ENCODE measurements at regions of chr6 and their contacts with region 1.

Region 1: GRCh38 chr6:490251-491037 is 98.9 kb downstream of the IRF4 start:
- DNase-seq: peak; percentile 71
- ATAC-seq: peak; percentile 62
- H3K4me3 Mint-ChIP-seq: peak overlapping the region; percentile 58
- H3K27ac Mint-ChIP-seq: peak overlapping the region; percentile 97
- H3K4me1 Mint-ChIP-seq: peaks cover 95% of the 10 kb centered on the region
- H3K27me3 Mint-ChIP-seq: no peaks in the 10 kb centered on the region

Region 2: DNA sequence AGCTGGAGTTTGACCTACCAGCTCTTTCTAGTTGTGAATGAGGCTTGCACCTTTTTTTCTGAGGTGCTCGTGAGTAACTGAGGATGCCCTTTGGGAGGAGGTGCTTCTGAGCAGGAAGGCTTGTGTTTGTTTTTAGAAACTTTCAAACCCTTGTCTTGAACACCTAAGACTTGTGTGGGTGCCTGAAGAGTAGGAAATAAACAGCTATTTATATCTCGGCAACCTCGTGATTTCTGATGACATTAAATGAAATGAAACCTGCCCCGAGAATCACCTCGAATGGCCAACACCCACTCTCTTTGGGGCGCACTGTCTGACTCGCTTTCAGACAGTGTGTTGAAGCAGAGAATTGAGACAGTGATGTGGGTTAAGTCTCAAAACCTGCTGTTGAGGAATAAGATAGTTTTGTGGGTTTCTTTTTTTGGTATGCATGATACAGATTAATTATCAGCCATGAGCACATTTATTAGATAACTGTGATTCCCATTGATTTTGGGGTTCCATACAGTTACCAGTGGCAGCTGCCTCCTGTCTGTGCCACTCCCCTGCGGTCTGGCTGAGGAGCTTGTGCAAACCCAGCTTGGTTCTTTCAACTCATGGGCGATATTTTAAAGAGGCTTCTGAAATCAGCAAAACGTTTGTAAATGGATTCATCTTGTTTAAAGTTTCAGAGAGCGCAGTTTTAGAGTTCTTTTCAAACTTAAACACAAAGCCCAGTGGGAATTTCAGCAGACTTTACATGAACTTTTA is 90.5 kb before region 1 on chr6:
- CTCF ChIA-PET with region 1: interaction called, 12 read pairs
- POLR2A ChIA-PET with region 1: interaction called, 21 read pairs
- intact Hi-C with region 1: loop called (anchors 2 kb)
- DNase-seq: peak; percentile 78
- ATAC-seq: peak; percentile 28
- H3K4me3 Mint-ChIP-seq: peak overlapping the region; percentile 68
- H3K27ac Mint-ChIP-seq: peak overlapping the region; percentile 88
- H3K4me1 Mint-ChIP-seq: peaks cover 91% of the 10 kb centered on the region
- H3K27me3 Mint-ChIP-seq: no peaks in the 10 kb centered on the region

Region 3: DNA sequence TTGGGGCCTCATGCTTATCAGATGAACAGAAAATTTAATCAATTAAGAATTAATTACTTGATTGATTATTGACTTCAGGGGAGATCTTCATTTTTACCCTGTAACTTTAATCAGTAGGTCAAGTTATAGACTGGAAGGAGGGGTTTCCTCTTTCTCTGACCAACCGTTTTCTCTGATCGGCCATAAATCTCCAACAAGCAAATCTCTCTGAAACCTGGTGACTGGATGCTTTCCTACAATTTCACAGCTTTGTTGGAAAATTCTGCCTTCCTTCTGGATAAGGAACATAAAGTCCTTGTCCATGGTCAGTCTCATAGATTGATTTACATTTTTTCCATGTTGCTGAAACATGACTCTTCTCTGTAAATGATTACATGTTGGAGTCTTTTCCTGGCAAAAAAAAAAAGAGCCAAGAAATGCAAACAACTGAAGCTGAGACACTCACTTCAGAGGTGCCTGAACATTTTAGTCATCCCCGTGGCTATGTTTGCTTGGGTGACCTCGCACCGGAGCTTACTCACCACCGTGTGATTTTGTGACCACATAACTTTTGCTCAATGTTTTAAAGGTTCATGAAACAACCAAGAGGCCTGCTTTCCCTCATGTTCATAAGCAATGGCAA is 67.9 kb before region 1 on chr6:
- CTCF ChIA-PET with region 1: no interaction called
- POLR2A ChIA-PET with region 1: interaction called, 3 read pairs
- intact Hi-C with region 1: loop called in 1 of 2 experiments (anchors 2 kb)
- DNase-seq: peak; percentile 87
- ATAC-seq: peak; percentile 99
- H3K4me3 Mint-ChIP-seq: no peak overlapping the region
- H3K27ac Mint-ChIP-seq: peak overlapping the region; percentile 63
- H3K4me1 Mint-ChIP-seq: peaks cover 31% of the 10 kb centered on the region
- H3K27me3 Mint-ChIP-seq: no peaks in the 10 kb centered on the region

Region 4: DNA sequence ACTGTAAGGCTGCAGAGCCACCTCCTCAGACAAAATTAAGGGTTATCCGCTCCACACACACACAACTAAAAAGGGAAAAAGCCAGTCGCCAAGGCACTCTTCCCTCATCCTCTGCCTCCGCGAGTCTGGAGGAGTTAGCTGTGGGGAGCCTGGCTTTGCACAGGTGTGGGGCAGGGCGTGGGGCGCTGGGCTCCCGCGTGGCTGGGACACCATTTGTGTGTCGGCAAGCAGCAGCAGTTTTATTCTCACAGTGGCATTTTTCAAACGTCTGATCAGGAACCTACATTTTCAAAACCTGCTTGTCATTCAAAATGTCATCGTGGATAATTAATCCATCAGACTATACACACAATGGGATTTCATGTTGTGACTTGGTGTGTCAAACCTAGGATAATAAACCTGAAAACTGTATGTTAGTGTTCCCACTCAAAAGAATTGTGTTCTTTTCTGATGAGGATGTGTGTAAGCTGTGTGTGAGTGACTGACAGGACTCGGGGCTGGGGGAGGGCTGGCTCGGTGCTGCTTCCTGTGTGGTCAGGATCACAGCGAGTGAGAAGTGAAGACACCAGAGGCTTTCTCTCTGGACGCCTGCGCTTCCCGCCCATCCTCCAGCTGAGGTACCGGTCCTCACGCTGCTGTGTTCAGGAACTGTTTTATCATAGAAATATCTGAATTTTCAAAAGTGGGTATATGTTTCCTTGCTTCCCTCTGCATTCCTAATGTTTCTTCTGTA is 15.8 kb before region 1 on chr6:
- CTCF ChIA-PET with region 1: interaction called, 3 read pairs
- POLR2A ChIA-PET with region 1: interaction called, 10 read pairs
- intact Hi-C with region 1: no loop called
- DNase-seq: peak; percentile 92
- ATAC-seq: peak; percentile 95
- H3K4me3 Mint-ChIP-seq: peak overlapping the region; percentile 63
- H3K27ac Mint-ChIP-seq: peak overlapping the region; percentile 79
- H3K4me1 Mint-ChIP-seq: peaks cover 77% of the 10 kb centered on the region
- H3K27me3 Mint-ChIP-seq: no peaks in the 10 kb centered on the region

Region 5: DNA sequence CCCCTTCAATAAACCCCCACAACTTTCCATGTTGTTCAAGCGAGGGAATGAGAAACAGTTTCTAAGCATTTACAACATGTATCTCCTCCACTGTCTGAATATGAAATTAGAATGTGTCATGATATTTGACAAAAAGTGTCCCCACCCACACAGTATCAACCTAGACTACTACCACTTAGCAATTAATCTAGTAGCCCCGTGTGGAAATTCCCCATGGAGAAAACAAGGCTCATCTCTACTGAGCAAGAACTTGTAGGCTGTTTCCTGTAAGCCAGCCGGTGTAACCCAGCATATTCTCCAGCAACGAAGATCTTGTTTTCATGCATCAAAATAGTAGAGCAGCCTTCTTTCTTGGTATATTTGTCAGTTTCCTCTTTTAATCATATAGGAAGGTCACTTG is 16.1 kb after region 1 on chr6:
- CTCF ChIA-PET with region 1: interaction called, 11 read pairs
- POLR2A ChIA-PET with region 1: interaction called, 17 read pairs
- intact Hi-C with region 1: loop called (anchors 1 kb)
- DNase-seq: peak; percentile 77
- ATAC-seq: peak; percentile 59
- H3K4me3 Mint-ChIP-seq: peak overlapping the region; percentile 13
- H3K27ac Mint-ChIP-seq: peak overlapping the region; percentile 97
- H3K4me1 Mint-ChIP-seq: peaks cover 100% of the 10 kb centered on the region
- H3K27me3 Mint-ChIP-seq: no peaks in the 10 kb centered on the region

Region 6: DNA sequence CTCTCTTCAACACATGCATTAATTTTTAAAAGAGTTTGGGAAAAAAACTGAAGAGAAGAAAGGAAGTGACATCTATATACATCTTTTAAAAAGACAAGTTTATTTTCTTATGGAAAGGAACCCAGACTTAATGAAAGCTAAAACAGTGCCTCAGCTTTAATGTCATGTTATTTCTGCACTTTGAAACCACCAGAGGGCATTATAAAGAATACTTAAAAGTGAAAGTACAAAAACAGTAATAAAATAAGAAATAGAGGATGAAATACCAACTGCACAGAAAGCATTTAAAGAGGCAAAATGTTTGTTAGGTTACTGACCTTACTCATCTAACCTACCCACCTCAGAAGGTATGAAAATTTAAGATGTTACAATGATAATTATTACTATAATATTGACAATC is 67.6 kb after region 1 on chr6:
- CTCF ChIA-PET with region 1: interaction called, 18 read pairs
- POLR2A ChIA-PET with region 1: interaction called, 3 read pairs
- intact Hi-C with region 1: loop called (anchors 2 to 5 kb)
- DNase-seq: no peak
- ATAC-seq: no peak
- H3K4me3 Mint-ChIP-seq: peak overlapping the region; percentile 15
- H3K27ac Mint-ChIP-seq: peak overlapping the region; percentile 90
- H3K4me1 Mint-ChIP-seq: peaks cover 63% of the 10 kb centered on the region
- H3K27me3 Mint-ChIP-seq: no peaks in the 10 kb centered on the region

Region 7: GRCh38 chr6:683742-684440 is 193.4 kb after region 1 on chr6:
- CTCF ChIA-PET with region 1: interaction called, 4 read pairs
- POLR2A ChIA-PET with region 1: no interaction called
- intact Hi-C with region 1: loop called in 1 of 2 experiments (anchors 1 kb)
- DNase-seq: peak; percentile 46
- ATAC-seq: peak; percentile 7
- H3K4me3 Mint-ChIP-seq: peak overlapping the region; percentile 38
- H3K27ac Mint-ChIP-seq: peak overlapping the region; percentile 61
- H3K4me1 Mint-ChIP-seq: peaks cover 53% of the 10 kb centered on the region
- H3K27me3 Mint-ChIP-seq: no peaks in the 10 kb centered on the region

Region 8: DNA sequence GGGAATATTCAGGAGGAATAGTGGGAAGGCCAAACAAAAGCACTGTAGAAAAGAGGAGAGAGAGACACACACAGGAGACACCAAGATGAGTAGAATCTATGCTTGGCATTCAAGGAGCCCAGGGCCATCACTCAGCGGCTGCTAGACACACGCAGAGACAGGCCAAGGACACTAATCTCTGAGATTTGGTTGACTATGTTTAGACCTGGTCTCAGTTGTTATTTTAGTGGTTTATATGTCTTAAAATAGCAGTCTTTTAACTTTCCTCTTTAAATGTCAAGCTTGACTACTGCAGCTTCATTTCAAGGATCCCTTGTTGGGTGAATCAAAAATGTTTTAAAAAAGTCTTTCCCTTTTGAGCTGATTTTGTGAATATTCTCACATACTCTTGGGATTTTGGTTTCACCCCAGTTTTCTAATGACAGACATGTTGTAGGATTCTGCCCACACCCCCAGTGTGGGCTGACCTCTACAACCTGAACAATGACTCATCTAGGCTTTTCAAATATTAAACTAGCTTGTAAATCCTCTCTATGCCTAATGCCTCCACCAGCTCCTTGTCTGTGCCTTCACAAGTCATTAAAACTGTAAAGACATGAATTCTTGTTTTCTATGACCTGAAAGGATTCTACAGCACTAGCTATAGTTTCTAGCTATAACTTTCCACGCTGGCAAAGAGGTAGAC is 345.2 kb after region 1 on chr6:
- CTCF ChIA-PET with region 1: no interaction called
- POLR2A ChIA-PET with region 1: no interaction called
- intact Hi-C with region 1: no loop called
- DNase-seq: no peak
- ATAC-seq: no peak
- H3K4me3 Mint-ChIP-seq: no peak overlapping the region
- H3K27ac Mint-ChIP-seq: no peak overlapping the region
- H3K4me1 Mint-ChIP-seq: no peaks in the 10 kb centered on the region
- H3K27me3 Mint-ChIP-seq: peaks cover 13% of the 10 kb centered on the region